Sciatic nerve (tissue), 2 donors: ENCODE measurements at regions of chr11 and their contacts with region 1.

Region 1: DNA sequence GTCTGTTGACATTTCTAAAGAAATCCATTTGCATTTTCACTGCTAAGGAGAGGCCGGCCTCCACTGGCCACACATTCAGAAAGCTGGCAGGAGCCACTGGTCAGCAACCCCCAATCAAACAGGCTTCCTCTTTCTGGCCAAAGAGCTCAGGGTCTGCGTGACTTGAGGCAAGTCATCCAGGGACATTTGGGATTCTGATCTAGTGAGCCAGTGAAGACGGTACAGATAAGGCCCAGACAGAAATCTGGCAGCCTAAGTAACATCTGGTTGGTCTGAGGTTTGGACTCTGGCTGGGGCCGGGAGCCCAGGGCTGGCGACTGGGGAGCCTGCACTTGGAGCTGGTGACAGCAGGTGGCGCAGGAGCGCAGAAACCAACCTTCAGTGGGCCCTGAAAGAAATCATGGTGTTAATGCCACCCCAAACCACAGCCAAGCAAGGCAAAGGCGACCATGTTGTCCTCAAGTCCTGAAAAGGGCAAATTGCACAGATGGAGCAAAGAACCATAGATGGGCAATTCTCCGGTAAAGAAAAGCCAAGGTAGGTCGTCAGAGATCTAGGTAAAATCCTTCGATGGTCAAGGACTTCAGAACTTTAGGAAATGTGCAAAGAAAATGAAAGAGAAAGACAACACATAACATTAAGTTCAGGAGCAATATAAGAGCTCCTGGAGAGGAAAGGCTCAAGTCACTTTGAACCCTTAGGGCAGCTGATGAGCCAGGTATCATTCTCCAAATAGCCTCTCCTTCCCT is 99.4 kb upstream of the BLID start:
- DNase-seq: peak; percentile 86
- ATAC-seq: peak; percentile 95

Region 2: GRCh38 chr11:121207485-121208115 is 1007.8 kb before region 1 on chr11:
- intact Hi-C with region 1: no loop called
- DNase-seq: no peak
- ATAC-seq: peak; percentile 86

Region 3: GRCh38 chr11:122505304-122506006 is 290.0 kb after region 1 on chr11:
- intact Hi-C with region 1: loop called (anchors 5 kb)
- DNase-seq: peak; percentile 92
- ATAC-seq: peak; percentile 98